ENCODE measurements at regions of chr4 and their contacts with region 1.

Region 1: DNA sequence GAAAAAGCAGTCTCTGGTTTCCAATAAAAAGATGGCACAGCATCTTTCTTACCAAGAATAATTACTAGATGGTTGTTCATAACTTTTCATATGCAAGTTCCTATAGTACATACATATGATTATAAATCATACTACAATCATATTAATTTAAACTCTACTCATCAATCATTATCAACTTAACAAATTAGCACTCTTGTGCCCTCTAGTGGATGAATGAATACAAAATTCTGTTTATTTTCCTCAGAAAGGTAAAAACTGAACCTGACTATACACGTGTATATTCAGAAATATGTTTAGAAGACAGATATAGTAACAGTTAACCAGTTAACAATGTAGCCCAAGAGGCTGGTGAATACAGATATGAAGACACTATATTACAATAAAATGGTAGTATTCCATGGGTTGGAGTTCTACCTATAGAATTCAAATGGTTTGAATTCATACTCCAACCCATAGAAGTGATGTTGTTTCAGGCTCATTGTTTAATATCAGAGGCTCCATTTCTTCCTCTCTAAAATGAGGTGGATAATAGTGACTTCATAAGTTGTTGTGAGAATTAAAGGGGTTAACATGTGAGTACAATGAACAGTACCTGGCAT is 100.0 kb downstream of the ADAMTS3 start:
- DNase-seq: no peak
- ATAC-seq: no peak

Region 2: DNA sequence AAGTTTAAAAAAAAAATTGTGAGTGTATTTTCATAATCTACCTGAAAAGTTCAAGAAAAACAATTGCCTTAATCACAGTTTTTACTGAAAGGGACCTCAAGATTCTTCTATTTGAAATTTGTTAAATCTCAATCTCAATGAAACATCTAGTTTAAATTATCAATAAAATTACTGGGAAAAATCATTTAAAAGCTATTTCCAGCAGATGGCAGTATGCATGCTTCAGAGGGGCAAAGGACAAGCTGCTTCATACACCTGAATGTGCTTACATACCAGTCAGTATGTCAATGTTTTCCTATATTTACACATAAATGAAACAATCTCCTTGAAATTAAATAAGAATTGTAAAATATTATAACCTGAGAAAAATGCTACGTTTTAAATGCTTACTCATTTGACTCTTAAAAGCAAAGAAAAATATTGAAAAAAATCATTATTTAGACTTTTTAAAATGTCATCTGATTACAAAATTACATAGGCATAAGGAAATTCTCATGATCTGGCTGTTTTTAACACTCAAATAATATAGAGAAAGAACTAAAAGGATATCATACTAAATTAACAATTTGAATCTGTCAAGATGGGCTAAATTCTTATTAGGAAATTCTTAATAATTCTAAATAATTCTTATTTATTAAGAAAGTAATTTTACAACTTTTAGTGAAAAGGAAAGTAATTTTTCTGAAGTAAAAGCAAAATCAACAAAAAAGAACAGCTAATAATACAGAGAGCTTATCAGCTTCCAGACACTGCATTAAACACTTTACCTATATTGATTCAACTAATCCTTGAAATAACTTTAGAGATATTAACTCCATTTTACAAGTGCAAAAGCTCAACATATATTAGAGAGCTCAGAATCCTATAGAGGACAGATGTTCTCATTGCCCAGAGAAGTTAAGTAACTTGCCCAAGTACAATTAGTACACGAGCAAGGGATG is 142.0 kb before region 1 on chr4:
- intact Hi-C with region 1: loop called (anchors 5 kb)
- DNase-seq: no peak
- ATAC-seq: no peak

Region 3: GRCh38 chr4:72553540-72554337 is 84.7 kb after region 1 on chr4:
- intact Hi-C with region 1: no loop called
- DNase-seq: no peak
- ATAC-seq: no peak

Region 4: GRCh38 chr4:72919937-72920336 is 450.9 kb after region 1 on chr4:
- intact Hi-C with region 1: no loop called
- DNase-seq: no peak
- ATAC-seq: no peak

Measured in Right ventricle myocardium superior (tissue), 1 donor.